Activated CD4-positive, alpha-beta T cell treated with anti-CD3 and anti-CD28 coated beads, Interleukin-2, amount 10 ng/mL, durations not matched to agents 24 days and 14 days (primary cell): ENCODE measurements at regions of chr1 and their contacts with region 1.

Region 1: GRCh38 chr1:113871597-113872113 is at the start of gene PTPN22:
- DNase-seq: peak; percentile 95
- H3K4me3 Mint-ChIP-seq: peak within 1 kb of the TSS; percentile 94
- H3K27ac Mint-ChIP-seq: peak within 1 kb of the TSS; percentile 96
- H3K4me1 Mint-ChIP-seq: peaks cover 63% of the 10 kb centered on the region
- H3K27me3 Mint-ChIP-seq: peaks cover 2% of the 10 kb centered on the region
- total RNA-seq, gene PTPN22: 60.4 and 64.1 TPM in 2 replicates

Region 2: DNA sequence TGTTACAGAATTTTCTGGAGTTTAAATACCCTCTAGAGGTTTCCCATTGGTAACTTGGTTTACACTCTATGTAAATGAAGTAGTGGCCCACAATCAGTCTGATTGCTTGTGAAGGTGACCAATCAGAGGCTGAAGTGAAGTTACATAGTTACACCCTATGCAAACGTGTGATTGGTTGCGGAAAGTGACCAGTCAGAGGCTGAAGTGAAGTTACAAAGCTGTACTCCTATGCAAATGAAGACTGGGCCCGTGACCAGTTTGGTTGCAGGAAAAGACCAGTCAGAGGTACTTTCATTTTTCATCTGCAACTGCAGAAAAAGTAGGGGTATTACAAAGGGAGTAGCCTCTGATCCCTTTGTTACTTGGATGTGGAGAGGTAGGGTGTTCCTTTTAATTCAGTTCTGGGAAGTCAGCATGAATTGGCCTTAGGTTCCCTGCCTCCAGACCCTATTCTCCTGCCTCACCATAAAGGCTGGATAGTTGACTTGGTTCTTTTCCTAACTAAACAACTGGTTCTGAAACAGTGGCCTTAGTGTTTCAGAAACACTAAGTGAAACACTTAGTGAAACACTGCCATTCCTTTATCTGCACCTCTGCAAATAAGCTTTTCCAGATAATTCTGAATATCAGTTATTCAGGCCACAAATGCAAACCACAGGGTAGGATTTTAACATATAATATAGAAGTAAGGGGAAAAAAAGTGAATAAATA is 442.1 kb before region 1 on chr1:
- intact Hi-C with region 1: no loop called
- DNase-seq: peak; percentile 24
- H3K4me3 Mint-ChIP-seq: no peak overlapping the region
- H3K27ac Mint-ChIP-seq: no peak overlapping the region
- H3K4me1 Mint-ChIP-seq: no peaks in the 10 kb centered on the region
- H3K27me3 Mint-ChIP-seq: peaks cover 4% of the 10 kb centered on the region

Region 3: DNA sequence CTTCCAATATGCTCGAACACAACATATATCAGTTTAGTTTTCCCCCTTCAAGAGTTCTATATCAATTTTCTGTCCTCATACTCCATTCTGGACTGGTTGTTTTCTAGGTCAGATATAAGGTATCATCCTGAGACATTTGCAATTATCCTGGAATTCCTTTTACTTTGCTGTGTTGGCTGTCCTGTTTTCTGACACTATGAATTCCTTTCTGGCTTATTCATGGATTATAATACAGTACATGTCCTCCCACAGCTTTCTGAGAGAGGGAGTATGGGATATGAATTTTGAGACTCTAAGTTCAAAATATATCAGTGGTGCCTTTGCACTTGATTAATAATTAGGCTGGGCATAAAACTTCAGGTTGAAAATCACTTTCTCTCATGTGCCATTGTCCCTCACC is 124.3 kb before region 1 on chr1:
- intact Hi-C with region 1: no loop called
- DNase-seq: no peak
- H3K4me3 Mint-ChIP-seq: no peak overlapping the region
- H3K27ac Mint-ChIP-seq: no peak overlapping the region
- H3K4me1 Mint-ChIP-seq: peaks cover 11% of the 10 kb centered on the region
- H3K27me3 Mint-ChIP-seq: no peaks in the 10 kb centered on the region

Region 4: GRCh38 chr1:113835642-113836307 is 35.9 kb before region 1 on chr1:
- intact Hi-C with region 1: loop called (anchors 5 kb)
- DNase-seq: peak; percentile 72
- H3K4me3 Mint-ChIP-seq: no peak overlapping the region
- H3K27ac Mint-ChIP-seq: no peak overlapping the region
- H3K4me1 Mint-ChIP-seq: peaks cover 4% of the 10 kb centered on the region
- H3K27me3 Mint-ChIP-seq: no peaks in the 10 kb centered on the region

Region 5: DNA sequence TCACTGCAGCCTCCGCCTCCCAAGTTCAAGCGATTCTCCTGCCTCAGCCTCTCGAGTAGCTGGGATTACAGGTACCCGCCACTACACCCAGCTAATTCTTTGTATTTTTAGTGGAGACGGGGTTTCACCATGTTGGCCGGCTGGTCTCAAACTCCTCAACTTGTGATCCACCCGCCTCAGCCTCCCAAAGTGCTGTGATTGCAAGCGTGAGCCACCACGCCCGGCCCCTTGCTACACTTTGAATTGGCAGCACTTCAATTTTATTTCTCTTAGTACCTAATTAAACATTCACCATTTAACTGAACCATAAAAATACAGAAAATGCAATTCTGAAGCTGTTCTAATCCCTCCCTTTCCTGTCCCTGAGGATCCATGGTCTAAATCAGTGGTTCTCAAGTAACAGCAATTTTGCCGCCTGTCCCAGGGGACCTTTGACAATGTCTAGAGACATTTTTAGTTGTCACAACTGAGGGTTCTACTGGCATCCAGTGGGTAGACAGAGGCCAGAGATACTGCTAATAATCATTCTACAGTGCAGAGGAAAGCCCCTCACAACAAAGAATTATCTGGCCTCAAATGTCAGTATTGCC is 20.1 kb after region 1 on chr1:
- intact Hi-C with region 1: loop called (anchors 2 kb)
- DNase-seq: no peak
- H3K4me3 Mint-ChIP-seq: no peak overlapping the region
- H3K27ac Mint-ChIP-seq: no peak overlapping the region
- H3K4me1 Mint-ChIP-seq: peaks cover 19% of the 10 kb centered on the region
- H3K27me3 Mint-ChIP-seq: no peaks in the 10 kb centered on the region